ENCODE measurements at regions of chr3 and their contacts with region 1.

Region 1: DNA sequence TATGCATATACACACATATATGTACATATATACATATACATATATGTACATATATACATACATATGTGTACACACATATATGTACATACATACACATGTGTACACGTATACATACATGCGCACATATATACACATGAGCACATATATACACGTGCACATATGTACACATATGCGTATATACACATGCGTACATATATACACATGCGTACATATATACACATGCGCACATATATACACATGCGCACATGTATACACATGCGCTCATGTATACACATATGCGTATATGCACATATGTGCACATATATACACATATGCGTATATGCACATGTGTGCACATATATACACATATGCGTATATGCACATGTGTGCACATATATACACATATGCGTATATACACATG is 353.0 kb downstream of the EDEM1 start:
- DNase-seq: no peak
- ATAC-seq: no peak
- H3K4me3 ChIP-seq: no peak overlapping the region
- H3K27ac ChIP-seq: no peak overlapping the region
- H3K4me1 ChIP-seq: no peaks in the 10 kb centered on the region
- H3K27me3 ChIP-seq: no peaks in the 10 kb centered on the region
- CTCF ChIP-seq: no peak
- POLR2A ChIP-seq: no peak

Region 2: GRCh38 chr3:4687167-4687566 is 853.4 kb before region 1 on chr3:
- intact Hi-C with region 1: loop called in 1 of 10 experiments (anchors 10 kb)
- DNase-seq: no peak
- ATAC-seq: no peak
- H3K4me3 ChIP-seq: no peak overlapping the region
- H3K27ac ChIP-seq: no peak overlapping the region
- H3K4me1 ChIP-seq: peaks cover 0 to 6% (median 0%) of the 10 kb centered on the region in 12 donors
- H3K27me3 ChIP-seq: no peaks in the 10 kb centered on the region
- CTCF ChIP-seq: no peak
- POLR2A ChIP-seq: no peak

Measured in heart left ventricle (tissue), 16 donors.